ENCODE measurements at regions of chr11 and their contacts with region 1.

Region 1: DNA sequence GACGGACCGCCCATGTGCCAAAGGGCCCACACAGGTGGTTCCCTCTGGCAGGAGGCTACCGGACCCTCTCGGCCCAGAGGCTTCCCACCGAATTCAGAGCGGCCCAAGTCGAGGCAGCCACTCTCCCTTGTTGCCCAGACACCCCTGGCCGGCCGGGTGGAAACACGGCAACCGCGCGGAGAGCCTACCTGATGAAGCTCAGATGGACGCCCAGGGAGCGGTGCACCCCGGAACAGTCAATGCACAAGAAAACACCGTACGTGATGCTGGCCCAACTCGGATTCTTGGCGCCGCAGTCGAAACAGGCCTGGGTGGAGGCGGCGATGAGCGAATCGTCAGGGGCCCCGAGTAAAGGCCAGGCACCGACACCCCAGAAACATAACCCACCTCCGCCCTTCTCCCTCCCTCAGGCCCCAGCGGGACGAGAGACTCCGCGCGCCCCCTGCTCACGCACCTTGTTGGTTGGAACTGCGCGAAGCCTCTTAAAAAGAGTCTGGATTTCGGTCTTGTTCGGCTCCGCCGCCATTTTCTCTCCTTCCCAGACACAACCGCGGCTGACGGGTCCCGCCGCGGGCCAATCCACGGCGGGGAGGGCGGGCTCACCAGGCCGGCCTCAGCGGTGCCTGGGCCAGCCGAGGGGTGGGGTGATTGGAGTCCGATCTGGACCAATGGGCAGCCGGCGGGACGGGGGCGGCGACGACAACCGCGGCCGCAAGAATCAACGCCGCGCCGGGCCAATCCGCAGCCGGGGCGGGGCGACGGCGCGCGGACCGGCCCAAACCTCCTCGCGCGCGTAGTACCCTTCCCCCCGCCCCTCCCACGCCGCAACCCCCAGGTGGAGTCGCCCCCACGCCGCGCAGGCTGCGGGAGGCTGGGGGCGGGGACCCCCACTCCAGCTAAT is at the start of gene ARFGAP2:
- DNase-seq: peak; percentile 89 to 98
- H3K4me3 ChIP-seq: peak within 1 kb of the TSS; percentile 98 to 99
- H3K27ac ChIP-seq: peak within 1 kb of the TSS; percentile 98 to 99
- H3K4me1 ChIP-seq: peaks cover 15 to 33% of the 10 kb centered on the region in 2 donors
- H3K27me3 ChIP-seq: no peaks in the 10 kb centered on the region
- CTCF ChIP-seq: no peak
- total RNA-seq, gene ARFGAP2: 66.1 TPM

Region 2: DNA sequence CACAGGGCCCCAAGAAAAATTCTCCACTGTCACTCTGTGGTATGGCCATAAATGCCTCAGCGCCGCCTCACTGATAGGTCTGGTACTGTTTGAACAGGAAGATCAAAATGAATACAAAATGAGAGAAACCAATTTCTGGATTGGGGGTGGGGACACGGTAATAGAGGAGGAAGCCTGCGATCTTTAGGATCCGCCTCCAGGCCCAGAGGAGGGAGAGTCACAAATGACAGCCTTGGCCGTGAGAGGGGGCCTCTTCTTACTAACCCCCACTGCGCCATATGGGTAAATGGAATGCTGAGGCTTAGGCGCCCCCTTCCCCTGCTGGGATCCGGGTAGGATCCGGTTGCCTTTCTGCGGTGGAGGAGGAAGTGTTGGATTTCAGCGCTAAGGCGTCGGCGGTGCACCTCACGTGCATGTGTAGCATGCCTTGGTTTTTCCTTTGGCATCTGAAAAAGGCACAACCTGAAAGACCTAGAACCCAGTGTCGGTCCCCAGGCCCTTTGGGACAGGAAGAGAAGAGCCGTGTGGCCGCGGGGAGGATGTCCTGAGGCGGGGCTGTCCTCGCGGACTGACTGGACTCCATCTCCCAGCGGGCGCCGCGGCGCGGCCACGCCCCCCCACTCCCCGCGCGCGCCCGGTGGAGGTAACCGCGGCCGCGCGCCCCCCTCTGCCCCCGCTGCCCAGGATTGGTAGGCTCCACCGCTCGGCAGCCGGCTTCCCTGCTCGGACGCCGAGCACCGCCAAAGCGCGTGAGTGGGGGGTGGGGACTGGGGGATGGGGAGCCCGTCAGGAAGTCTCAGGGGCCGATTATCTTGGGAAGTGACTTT is 92.6 kb after region 1 on chr11:
- intact Hi-C with region 1: loop called (anchors 1 kb)
- DNase-seq: peak; percentile 67 to 94
- H3K4me3 ChIP-seq: peak overlapping the region; percentile 81 to 90
- H3K27ac ChIP-seq: peak overlapping the region; percentile 86 to 95
- H3K4me1 ChIP-seq: peaks cover 10 to 19% of the 10 kb centered on the region in 2 donors
- H3K27me3 ChIP-seq: no peaks in the 10 kb centered on the region
- CTCF ChIP-seq: peak in 2 of 3 experiments; percentile 12 to 15

Measured in ascending aorta (tissue), 2 donors.